IMR-90 (cell line): ENCODE measurements at regions of chr2 and their contacts with region 1.

Region 1: GRCh38 chr2:30711646-30712085 is 95.6 kb downstream of the CAPN13 start:
- DNase-seq: peak; percentile 90
- ATAC-seq: peak; percentile 90
- H3K4me3 ChIP-seq: no peak overlapping the region
- H3K27ac ChIP-seq: no peak overlapping the region
- H3K4me1 ChIP-seq: peaks cover 2% of the 10 kb centered on the region; the same call in 1 of the 2 replicates
- H3K27me3 ChIP-seq: peaks cover 5% of the 10 kb centered on the region; the same call in 1 of the 2 replicates
- CTCF ChIP-seq: peak; percentile 100
- POLR2A ChIP-seq: no peak
- RAD21 ChIP-seq: peak; percentile 93

Region 2: DNA sequence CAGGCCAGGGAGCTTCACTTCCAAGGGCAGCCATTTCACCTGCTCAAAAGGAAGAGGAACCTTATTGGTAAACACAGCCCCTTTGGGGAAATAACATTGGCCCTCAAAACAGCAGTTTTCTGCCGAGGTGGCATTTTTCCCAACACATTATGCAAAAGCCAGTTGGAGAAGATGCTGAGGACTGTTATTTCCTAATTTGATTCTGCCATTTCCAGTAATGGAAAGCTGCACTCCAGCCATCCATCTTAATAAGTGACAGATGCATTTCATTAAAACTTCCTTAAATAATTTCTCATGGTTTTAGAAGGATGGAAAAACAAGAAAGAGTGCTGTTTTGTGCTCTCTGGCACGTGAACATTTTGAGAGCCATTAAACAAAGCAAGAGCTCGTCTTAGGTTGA is 734.4 kb before region 1 on chr2:
- CTCF ChIA-PET with region 1: no interaction called
- POLR2A ChIA-PET with region 1: no interaction called
- dilution Hi-C with region 1: no loop called
- in situ Hi-C with region 1: no loop called
- intact Hi-C with region 1: no loop called
- DNase-seq: no peak
- ATAC-seq: no peak
- H3K4me3 ChIP-seq: no peak overlapping the region
- H3K27ac ChIP-seq: no peak overlapping the region
- H3K4me1 ChIP-seq: no peaks in the 10 kb centered on the region
- H3K27me3 ChIP-seq: no peaks in the 10 kb centered on the region
- CTCF ChIP-seq: no peak
- POLR2A ChIP-seq: no peak
- RAD21 ChIP-seq: no peak

Region 3: GRCh38 chr2:30165050-30165520 is 546.6 kb before region 1 on chr2:
- CTCF ChIA-PET with region 1: interaction called, 99 read pairs
- POLR2A ChIA-PET with region 1: no interaction called
- dilution Hi-C with region 1: no loop called
- in situ Hi-C with region 1: loop called (anchors 5 kb)
- intact Hi-C with region 1: loop called (anchors 1 kb)
- DNase-seq: peak; percentile 93
- ATAC-seq: peak; percentile 96
- H3K4me3 ChIP-seq: no peak overlapping the region
- H3K27ac ChIP-seq: no peak overlapping the region
- H3K4me1 ChIP-seq: peaks cover 3% of the 10 kb centered on the region; the same call in 1 of the 2 replicates
- H3K27me3 ChIP-seq: no peaks in the 10 kb centered on the region
- CTCF ChIP-seq: peak; percentile 98
- POLR2A ChIP-seq: peak; percentile 43; the same call in 1 of the 2 replicates
- RAD21 ChIP-seq: peak; percentile 84

Region 4: DNA sequence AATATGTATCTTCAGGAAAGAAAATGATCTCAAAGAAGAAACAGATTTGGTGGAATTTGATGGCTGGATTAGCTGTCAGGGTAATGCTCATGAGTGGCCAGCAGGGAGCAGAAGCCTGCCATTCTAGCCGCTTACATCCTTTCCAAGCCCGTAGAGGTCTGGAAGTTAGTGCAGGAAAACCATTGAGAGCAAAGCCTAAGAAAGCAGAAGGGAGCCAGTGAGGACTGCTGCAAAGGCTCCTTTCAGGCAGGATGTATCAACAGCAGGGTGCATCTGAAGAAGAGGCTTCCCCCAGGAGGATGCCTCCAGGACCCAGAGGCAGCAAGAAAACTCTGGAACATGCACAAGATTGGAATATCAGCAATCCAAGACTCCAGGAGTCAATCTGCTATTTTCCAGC is 503.2 kb before region 1 on chr2:
- CTCF ChIA-PET with region 1: interaction called, 49 read pairs
- POLR2A ChIA-PET with region 1: no interaction called
- dilution Hi-C with region 1: no loop called
- in situ Hi-C with region 1: loop called (anchors 5 kb)
- intact Hi-C with region 1: loop called (anchors 1 kb)
- DNase-seq: peak; percentile 82
- ATAC-seq: peak; percentile 99
- H3K4me3 ChIP-seq: no peak overlapping the region
- H3K27ac ChIP-seq: no peak overlapping the region
- H3K4me1 ChIP-seq: peaks cover 2% of the 10 kb centered on the region; the same call in 1 of the 2 replicates
- H3K27me3 ChIP-seq: 0 out of 2 replicates have a peak, but pooled peaks cover 3% of the 10 kb centered on the region
- CTCF ChIP-seq: peak; percentile 95
- POLR2A ChIP-seq: peak; percentile 63
- RAD21 ChIP-seq: peak; percentile 98

Region 5: DNA sequence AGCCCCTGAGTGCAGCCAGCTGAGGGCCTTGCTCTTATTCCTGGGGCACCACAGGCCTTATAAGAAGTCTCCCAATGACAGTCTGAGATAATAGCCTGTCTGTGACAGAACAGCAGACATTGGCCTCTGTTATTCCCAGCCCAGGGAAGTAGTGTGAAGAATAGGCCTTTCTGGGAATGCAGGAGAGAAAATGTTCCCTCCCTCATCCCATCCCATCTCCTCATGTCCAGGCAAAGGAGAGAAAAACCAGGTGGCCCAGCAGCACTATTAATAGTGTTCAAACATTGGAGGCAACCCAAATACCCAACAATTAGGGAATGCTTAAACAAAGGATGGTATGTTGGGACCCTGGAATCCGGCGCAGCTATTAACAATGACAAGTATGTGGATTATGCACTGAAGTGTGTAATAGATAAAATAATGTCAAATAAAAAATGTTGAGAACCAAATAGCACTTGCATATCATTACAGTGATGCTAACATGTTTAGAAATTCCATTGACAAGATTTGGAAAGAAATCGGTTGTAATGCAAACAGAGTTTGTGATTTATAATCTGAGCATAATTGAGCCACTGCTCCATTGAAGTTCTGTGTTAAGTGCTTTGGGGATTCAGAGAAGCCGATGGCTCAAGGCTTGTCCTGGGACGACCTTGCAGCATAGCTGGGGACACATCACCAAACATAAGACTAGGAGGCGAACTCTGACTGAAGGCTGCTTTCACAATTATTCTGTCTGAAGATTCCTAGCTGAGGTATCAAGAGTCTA is 411.0 kb before region 1 on chr2:
- CTCF ChIA-PET with region 1: interaction called, 7 read pairs
- POLR2A ChIA-PET with region 1: no interaction called
- dilution Hi-C with region 1: no loop called
- in situ Hi-C with region 1: no loop called
- intact Hi-C with region 1: loop called (anchors 1 kb)
- DNase-seq: peak; percentile 96
- ATAC-seq: peak; percentile 71
- H3K4me3 ChIP-seq: no peak overlapping the region
- H3K27ac ChIP-seq: peak overlapping the region; percentile 88
- H3K4me1 ChIP-seq: peaks cover 25% of the 10 kb centered on the region
- H3K27me3 ChIP-seq: no peaks in the 10 kb centered on the region
- CTCF ChIP-seq: no peak
- POLR2A ChIP-seq: no peak; the same call in 1 of the 2 replicates
- RAD21 ChIP-seq: no peak; the same call in none of the 2 replicates

Region 6: GRCh38 chr2:30511122-30512083 is 200.3 kb before region 1 on chr2:
- CTCF ChIA-PET with region 1: interaction called, 3 read pairs
- POLR2A ChIA-PET with region 1: no interaction called
- dilution Hi-C with region 1: no loop called
- in situ Hi-C with region 1: no loop called
- intact Hi-C with region 1: loop called (anchors 10 kb)
- DNase-seq: peak; percentile 60
- ATAC-seq: peak; percentile 78
- H3K4me3 ChIP-seq: no peak overlapping the region
- H3K27ac ChIP-seq: no peak overlapping the region
- H3K4me1 ChIP-seq: peaks cover 8% of the 10 kb centered on the region
- H3K27me3 ChIP-seq: no peaks in the 10 kb centered on the region
- CTCF ChIP-seq: no peak
- POLR2A ChIP-seq: no peak
- RAD21 ChIP-seq: peak; percentile 7; the same call in 1 of the 2 replicates

Region 7: GRCh38 chr2:31333527-31334183 is 622.0 kb after region 1 on chr2:
- CTCF ChIA-PET with region 1: interaction called, 7 read pairs
- POLR2A ChIA-PET with region 1: no interaction called
- dilution Hi-C with region 1: no loop called
- in situ Hi-C with region 1: loop called (anchors 5 kb)
- intact Hi-C with region 1: loop called (anchors 1 kb)
- DNase-seq: peak; percentile 84
- ATAC-seq: peak; percentile 74
- H3K4me3 ChIP-seq: no peak overlapping the region
- H3K27ac ChIP-seq: no peak overlapping the region
- H3K4me1 ChIP-seq: peaks cover 17% of the 10 kb centered on the region
- H3K27me3 ChIP-seq: 0 out of 2 replicates have a peak, but pooled peaks cover 2% of the 10 kb centered on the region
- CTCF ChIP-seq: peak; percentile 99
- POLR2A ChIP-seq: no peak
- RAD21 ChIP-seq: peak; percentile 99

Region 8: DNA sequence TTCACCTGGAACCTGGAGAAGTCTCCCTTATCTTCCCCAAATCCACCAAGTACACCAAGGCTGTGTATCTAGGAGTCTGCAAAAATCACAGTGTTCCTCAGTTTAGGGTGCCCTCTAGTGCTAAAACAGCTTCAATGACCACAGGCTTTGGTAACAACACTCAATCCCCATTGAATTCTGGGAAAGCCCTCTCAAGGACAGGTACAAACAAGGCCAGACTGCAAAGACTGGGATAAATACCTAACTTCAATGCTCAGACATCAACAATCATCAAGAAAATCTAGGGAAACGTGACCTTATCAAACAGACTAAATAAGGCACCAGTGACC is 1018.1 kb after region 1 on chr2:
- CTCF ChIA-PET with region 1: interaction called, 3 read pairs
- POLR2A ChIA-PET with region 1: no interaction called
- dilution Hi-C with region 1: no loop called
- in situ Hi-C with region 1: no loop called
- intact Hi-C with region 1: loop called (anchors 2 kb)
- DNase-seq: peak; percentile 35
- ATAC-seq: peak; percentile 82
- H3K4me3 ChIP-seq: no peak overlapping the region
- H3K27ac ChIP-seq: no peak overlapping the region
- H3K4me1 ChIP-seq: no peaks in the 10 kb centered on the region
- H3K27me3 ChIP-seq: no peaks in the 10 kb centered on the region
- CTCF ChIP-seq: peak; percentile 44
- POLR2A ChIP-seq: no peak
- RAD21 ChIP-seq: peak; percentile 41